ENCODE measurements at regions of chr17 and their contacts with region 1.

Region 1: GRCh38 chr17:3668279-3669085 is at the starts of genes EMC6 and TAX1BP3:
- DNase-seq: peak; percentile 100
- H3K4me3 ChIP-seq: peak within 1 kb of the TSS; percentile 86 to 90 (median 87)
- H3K27ac ChIP-seq: peak within 1 kb of the TSS; percentile 97
- H3K4me1 ChIP-seq: peaks cover 24% of the 10 kb centered on the region
- H3K27me3 ChIP-seq: no peaks in the 10 kb centered on the region
- CTCF ChIP-seq: no peak
- POLR2A ChIP-seq: peak; percentile 99
- total RNA-seq, gene EMC6: 54.0 and 62.2 TPM in 2 replicates
- total RNA-seq, gene TAX1BP3: 247 and 254 TPM in 2 replicates

Region 2: DNA sequence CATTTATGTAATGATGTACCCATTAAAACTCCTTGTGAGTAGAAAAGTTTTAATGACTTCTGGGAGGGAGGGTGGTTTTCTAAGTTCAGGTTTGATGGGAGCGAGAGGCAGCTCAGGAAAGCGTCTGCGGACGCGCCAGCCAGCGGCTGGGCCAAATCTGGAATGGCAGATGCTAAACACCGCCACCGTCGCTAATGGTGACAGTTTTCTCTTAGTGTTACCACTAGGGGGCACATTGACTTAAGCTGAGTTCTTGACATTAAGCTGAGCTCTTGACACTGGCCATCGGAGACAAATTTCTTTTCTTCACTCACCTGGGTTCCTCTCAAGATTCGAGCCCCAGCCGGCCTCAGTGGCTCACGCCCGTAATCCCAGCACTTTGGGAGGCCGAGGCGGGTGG is 66.0 kb before region 1 on chr17:
- CTCF ChIA-PET with region 1: no interaction called
- POLR2A ChIA-PET with region 1: no interaction called
- dilution Hi-C with region 1: no loop called
- intact Hi-C with region 1: loop called (anchors 2 kb)
- DNase-seq: no peak
- H3K4me3 ChIP-seq: no peak overlapping the region
- H3K27ac ChIP-seq: no peak overlapping the region
- H3K4me1 ChIP-seq: peaks cover 9% of the 10 kb centered on the region
- H3K27me3 ChIP-seq: no peaks in the 10 kb centered on the region
- CTCF ChIP-seq: peak; percentile 24 to 33
- POLR2A ChIP-seq: no peak

Region 3: GRCh38 chr17:3622977-3623594 is 45.4 kb before region 1 on chr17:
- CTCF ChIA-PET with region 1: no interaction called
- POLR2A ChIA-PET with region 1: no interaction called
- dilution Hi-C with region 1: no loop called
- intact Hi-C with region 1: no loop called
- DNase-seq: no peak
- H3K4me3 ChIP-seq: no peak overlapping the region
- H3K27ac ChIP-seq: no peak overlapping the region
- H3K4me1 ChIP-seq: peaks cover 4% of the 10 kb centered on the region
- H3K27me3 ChIP-seq: no peaks in the 10 kb centered on the region
- CTCF ChIP-seq: no peak
- POLR2A ChIP-seq: no peak

Region 4: GRCh38 chr17:3636154-3636907 is 32.2 kb before region 1 on chr17 and contains the starts of genes CTNS and SHPK:
- CTCF ChIA-PET with region 1: interaction called, 7 read pairs
- POLR2A ChIA-PET with region 1: interaction called, 18 read pairs
- dilution Hi-C with region 1: no loop called
- intact Hi-C with region 1: loop called (anchors 1 kb)
- DNase-seq: peak; percentile 95
- H3K4me3 ChIP-seq: peak within 1 kb of the TSS; percentile 65 to 83 (median 71)
- H3K27ac ChIP-seq: peak within 1 kb of the TSS; percentile 90
- H3K4me1 ChIP-seq: peaks cover 12% of the 10 kb centered on the region
- H3K27me3 ChIP-seq: no peaks in the 10 kb centered on the region
- CTCF ChIP-seq: no peak
- POLR2A ChIP-seq: peak; percentile 57
- total RNA-seq, gene CTNS: 20.8 and 25.9 TPM in 2 replicates
- total RNA-seq, gene SHPK: 15.9 and 17.8 TPM in 2 replicates

Region 5: DNA sequence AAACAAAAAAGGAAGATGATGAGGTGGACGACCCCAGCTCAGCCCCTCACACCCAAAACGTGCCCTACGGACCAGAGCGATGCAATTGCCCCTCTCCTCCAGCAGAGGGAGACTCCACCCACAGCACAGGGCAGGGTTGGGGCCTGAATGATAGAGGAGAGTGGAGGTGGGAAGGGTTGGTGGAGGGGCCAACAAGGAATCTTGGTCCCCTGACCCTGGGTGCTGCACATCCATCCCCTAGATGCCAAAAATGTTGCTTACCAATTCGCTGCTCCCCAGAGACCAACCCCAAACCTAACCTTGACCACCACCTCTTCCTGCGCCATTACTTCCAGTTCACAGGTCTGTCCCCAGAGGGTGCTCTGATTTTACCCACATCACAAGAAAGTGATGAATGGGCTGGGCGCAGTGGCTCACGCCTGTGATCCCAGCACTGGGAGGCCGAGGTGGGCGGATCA is 14.6 kb after region 1 on chr17:
- CTCF ChIA-PET with region 1: interaction called, 11 read pairs
- POLR2A ChIA-PET with region 1: no interaction called
- dilution Hi-C with region 1: no loop called
- intact Hi-C with region 1: no loop called
- DNase-seq: peak; percentile 31
- H3K4me3 ChIP-seq: no peak overlapping the region
- H3K27ac ChIP-seq: no peak overlapping the region
- H3K4me1 ChIP-seq: no peaks in the 10 kb centered on the region
- H3K27me3 ChIP-seq: peaks cover 0 to 7% of the 10 kb centered on the region in 2 experiments
- CTCF ChIP-seq: peak; percentile 93 to 96
- POLR2A ChIP-seq: no peak

Region 6: GRCh38 chr17:3723556-3724369 is 55.3 kb after region 1 on chr17 and contains the start of gene HASPIN:
- CTCF ChIA-PET with region 1: no interaction called
- POLR2A ChIA-PET with region 1: interaction called, 10 read pairs
- dilution Hi-C with region 1: no loop called
- intact Hi-C with region 1: loop called (anchors 5 kb)
- DNase-seq: peak; percentile 89
- H3K4me3 ChIP-seq: peak within 1 kb of the TSS; percentile 70 to 91 (median 89)
- H3K27ac ChIP-seq: peak within 1 kb of the TSS; percentile 54
- H3K4me1 ChIP-seq: peaks cover 28% of the 10 kb centered on the region
- H3K27me3 ChIP-seq: no peaks in the 10 kb centered on the region
- CTCF ChIP-seq: peak; percentile 9 to 56
- POLR2A ChIP-seq: peak; percentile 92
- total RNA-seq, gene HASPIN: 11.8 and 13.2 TPM in 2 replicates

Measured in endothelial cell of umbilical vein (primary cell).